ENCODE measurements at regions of chr1 and their contacts with region 1.

Region 1: GRCh38 chr1:66996018-66996682 is 57.8 kb downstream of the SLC35D1 start:
- DNase-seq: peak; percentile 81
- H3K4me3 ChIP-seq: no peak overlapping the region
- H3K27ac ChIP-seq: no peak overlapping the region
- H3K4me1 ChIP-seq: no peaks in the 10 kb centered on the region
- H3K27me3 ChIP-seq: no peaks in the 10 kb centered on the region
- CTCF ChIP-seq: peak; percentile 86

Region 2: DNA sequence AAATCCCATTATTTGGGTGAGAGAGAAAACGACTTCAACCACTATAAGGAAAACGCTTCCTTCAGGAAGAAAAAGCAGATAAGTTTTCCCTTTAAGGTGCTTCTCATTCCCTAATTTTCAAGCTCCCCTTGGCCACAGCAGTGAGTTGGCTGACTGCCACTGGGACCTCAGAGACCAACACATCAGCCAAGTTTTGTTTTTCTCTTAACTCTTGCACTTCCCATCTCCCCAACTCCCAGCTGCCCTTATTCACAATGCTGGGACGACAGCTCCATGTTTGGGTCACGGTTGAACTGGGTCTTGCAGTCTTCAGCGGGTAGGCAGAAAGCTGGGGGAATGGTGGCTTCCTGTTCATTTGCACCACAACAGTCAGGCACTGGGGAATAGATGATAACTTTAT is 443.3 kb before region 1 on chr1:
- CTCF ChIA-PET with region 1: no interaction called
- POLR2A ChIA-PET with region 1: no interaction called
- intact Hi-C with region 1: no loop called
- DNase-seq: peak; percentile 52
- H3K4me3 ChIP-seq: no peak overlapping the region
- H3K27ac ChIP-seq: peak overlapping the region; percentile 63
- H3K4me1 ChIP-seq: peaks cover 53% of the 10 kb centered on the region
- H3K27me3 ChIP-seq: no peaks in the 10 kb centered on the region
- CTCF ChIP-seq: no peak

Region 3: GRCh38 chr1:66764994-66765578 is 231.1 kb before region 1 on chr1:
- CTCF ChIA-PET with region 1: interaction called, 3 read pairs
- POLR2A ChIA-PET with region 1: no interaction called
- intact Hi-C with region 1: loop called (anchors 10 kb)
- DNase-seq: peak; percentile 65
- H3K4me3 ChIP-seq: no peak overlapping the region
- H3K27ac ChIP-seq: no peak overlapping the region
- H3K4me1 ChIP-seq: no peaks in the 10 kb centered on the region
- H3K27me3 ChIP-seq: no peaks in the 10 kb centered on the region
- CTCF ChIP-seq: peak; percentile 81

Region 4: DNA sequence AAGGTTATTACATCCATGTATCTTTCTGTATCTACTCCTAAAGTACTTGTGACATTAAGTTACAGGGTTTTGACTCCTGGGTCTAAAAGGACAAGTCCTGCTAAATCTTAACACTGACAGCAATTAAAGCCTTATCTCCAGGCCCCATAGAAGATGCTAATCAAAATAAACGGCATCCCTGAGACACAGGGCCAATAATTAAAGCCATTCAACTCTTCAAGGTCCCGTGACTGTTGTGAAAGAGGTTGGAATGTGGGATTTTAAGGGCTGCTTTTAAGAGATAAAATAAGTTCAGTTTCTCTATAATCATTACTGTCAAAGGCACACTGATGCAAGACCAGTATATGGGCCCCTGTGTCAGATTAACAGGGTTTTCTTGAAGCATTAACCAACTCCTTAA is 79.8 kb before region 1 on chr1:
- CTCF ChIA-PET with region 1: no interaction called
- POLR2A ChIA-PET with region 1: no interaction called
- intact Hi-C with region 1: no loop called
- DNase-seq: peak; percentile 26
- H3K4me3 ChIP-seq: no peak overlapping the region
- H3K27ac ChIP-seq: no peak overlapping the region
- H3K4me1 ChIP-seq: no peaks in the 10 kb centered on the region
- H3K27me3 ChIP-seq: no peaks in the 10 kb centered on the region
- CTCF ChIP-seq: no peak

Region 5: DNA sequence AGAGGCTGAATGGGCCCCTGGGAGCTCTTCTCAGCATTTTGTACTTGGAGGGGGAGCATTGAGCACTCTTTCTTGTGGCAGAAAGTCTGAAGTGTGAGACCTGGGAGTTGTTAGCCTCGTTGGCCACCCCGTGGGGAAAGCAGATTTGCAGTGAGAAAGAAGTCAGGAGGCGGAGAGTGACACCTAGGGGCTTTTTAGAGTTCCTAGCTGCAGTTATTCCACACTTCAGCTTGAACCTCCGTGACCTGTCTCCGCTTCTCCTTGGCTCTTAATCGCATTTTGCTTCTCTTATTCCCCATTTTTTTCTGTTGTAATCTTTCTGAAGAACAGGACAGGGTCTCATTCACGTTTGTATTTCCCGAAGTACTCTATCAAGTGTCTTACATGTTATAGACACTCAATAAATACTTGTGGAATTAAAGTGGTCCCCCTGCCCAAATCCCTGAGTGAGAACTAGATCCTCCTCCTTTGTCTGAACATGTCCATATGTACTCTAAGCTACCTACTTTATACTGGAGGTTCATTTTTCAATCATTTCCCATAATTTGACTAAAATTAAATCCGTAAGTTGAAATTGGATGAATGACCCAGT is 153.1 kb after region 1 on chr1:
- CTCF ChIA-PET with region 1: interaction called, 13 read pairs
- POLR2A ChIA-PET with region 1: no interaction called
- intact Hi-C with region 1: loop called (anchors 1 kb)
- DNase-seq: peak; percentile 81
- H3K4me3 ChIP-seq: no peak overlapping the region
- H3K27ac ChIP-seq: no peak overlapping the region
- H3K4me1 ChIP-seq: no peaks in the 10 kb centered on the region
- H3K27me3 ChIP-seq: no peaks in the 10 kb centered on the region
- CTCF ChIP-seq: peak; percentile 72

Region 6: DNA sequence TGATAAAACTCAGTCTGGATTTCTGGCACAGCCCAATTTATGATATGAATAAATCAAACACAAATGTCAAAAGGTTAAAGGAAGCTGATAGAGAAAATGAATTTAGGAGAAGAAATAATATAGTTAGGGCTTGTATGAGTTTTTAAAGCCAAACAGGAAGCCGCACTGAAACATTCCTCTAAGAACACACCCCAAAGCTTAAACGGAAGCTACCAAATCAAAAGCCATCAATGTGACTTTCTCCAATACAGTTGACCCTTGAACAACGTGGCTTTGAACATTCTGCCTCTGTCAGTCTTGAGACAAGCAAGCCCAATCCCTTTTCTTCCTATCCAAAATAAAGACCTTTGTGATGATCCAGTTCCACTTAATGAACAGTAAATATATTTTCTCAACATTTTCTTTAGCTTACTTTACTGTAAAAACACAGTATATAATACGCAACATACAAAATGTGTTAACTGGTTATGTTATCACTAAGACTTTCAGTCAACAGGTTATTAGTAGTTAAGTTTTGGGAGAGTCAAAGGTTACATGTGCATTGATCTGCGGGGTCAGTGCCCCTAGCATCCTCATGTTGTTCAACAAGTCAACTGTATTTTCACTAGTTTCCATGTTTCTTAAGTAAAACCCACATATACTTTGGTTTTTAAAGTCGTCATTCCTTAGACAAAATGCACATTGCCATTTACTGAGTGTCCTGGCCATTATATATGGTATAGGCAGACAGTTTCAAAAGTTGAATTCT is 422.9 kb after region 1 on chr1:
- CTCF ChIA-PET with region 1: no interaction called
- POLR2A ChIA-PET with region 1: no interaction called
- intact Hi-C with region 1: no loop called
- DNase-seq: no peak
- H3K4me3 ChIP-seq: no peak overlapping the region
- H3K27ac ChIP-seq: no peak overlapping the region
- H3K4me1 ChIP-seq: no peaks in the 10 kb centered on the region
- H3K27me3 ChIP-seq: no peaks in the 10 kb centered on the region
- CTCF ChIP-seq: no peak

Measured in A673 (cell line).